B cell (primary cell): ENCODE measurements at regions of chr15 and their contacts with region 1.

Region 1: DNA sequence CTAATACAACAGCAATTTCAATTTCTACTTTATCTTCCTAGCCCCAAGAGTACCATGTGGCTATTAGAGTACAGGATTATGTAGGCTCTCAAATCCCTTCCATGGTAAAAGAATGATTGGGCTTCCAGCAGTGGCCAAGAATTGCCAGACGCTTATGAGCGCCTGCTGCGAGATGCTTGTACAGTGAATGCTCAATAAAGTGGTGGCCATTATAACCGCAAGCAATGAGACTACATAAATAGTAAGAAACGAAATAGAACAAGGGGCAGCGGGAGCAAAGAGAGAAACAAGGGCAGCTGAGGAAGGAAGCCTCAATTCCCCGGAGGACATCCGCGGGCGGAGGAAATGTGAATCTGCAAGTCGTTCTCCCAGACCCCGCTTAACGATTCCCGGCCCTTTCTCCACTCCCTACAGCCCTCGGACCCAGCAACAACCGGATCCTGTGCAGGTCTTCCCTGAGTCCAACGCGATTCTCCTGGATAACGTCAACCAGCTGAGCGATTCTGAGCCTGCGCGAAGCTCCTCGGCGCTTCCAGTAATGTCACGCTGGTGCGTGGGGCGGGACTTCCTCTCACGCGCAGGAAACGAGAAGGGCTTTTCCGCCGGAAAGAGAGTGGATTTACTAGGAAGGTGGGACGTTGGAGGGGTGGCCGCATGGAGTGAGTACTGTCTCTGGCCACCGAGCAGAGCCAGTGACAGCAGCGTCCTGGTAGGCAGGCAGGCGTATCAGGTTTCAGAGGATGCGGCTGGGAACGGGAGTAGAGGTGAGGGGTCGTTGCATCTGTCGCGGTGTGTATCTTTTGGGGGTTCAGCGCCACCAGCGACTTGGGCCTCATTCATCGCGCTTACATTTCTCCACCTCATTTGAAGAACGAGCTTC is 40.5 kb upstream of the AP3B2 start:
- DNase-seq: peak; percentile 86
- ATAC-seq: peak; percentile 95
- H3K4me3 ChIP-seq: peak overlapping the region; percentile 75 to 97 (median 79)
- H3K4me3 Mint-ChIP-seq: peak overlapping the region; percentile 98
- H3K27ac ChIP-seq: peak overlapping the region; percentile 72 to 82
- H3K27ac Mint-ChIP-seq: peak overlapping the region; percentile 90
- H3K4me1 ChIP-seq: peaks cover 16 to 20% of the 10 kb centered on the region in 2 donors
- H3K4me1 Mint-ChIP-seq: peaks cover 41% of the 10 kb centered on the region
- H3K27me3 ChIP-seq: no peaks in the 10 kb centered on the region
- H3K27me3 Mint-ChIP-seq: no peaks in the 10 kb centered on the region
- CTCF ChIP-seq: no peak

Region 2: GRCh38 chr15:82680200-82681102 is 69.7 kb before region 1 on chr15:
- CTCF ChIA-PET with region 1: no interaction called
- POLR2A ChIA-PET with region 1: no interaction called
- intact Hi-C with region 1: loop called (anchors 1 kb)
- DNase-seq: peak; percentile 85
- ATAC-seq: peak; percentile 91
- H3K4me3 ChIP-seq: peak overlapping the region in 4 of 5 experiments; percentile 61 to 84 (median 72)
- H3K4me3 Mint-ChIP-seq: peak overlapping the region; percentile 92
- H3K27ac ChIP-seq: peak overlapping the region; percentile 46 to 65
- H3K27ac Mint-ChIP-seq: peak overlapping the region; percentile 87
- H3K4me1 ChIP-seq: peaks cover 14 to 15% of the 10 kb centered on the region in 2 donors
- H3K4me1 Mint-ChIP-seq: peaks cover 12% of the 10 kb centered on the region
- H3K27me3 ChIP-seq: peaks cover 0 to 21% (median 6%) of the 10 kb centered on the region in 4 experiments
- H3K27me3 Mint-ChIP-seq: peaks cover 6% of the 10 kb centered on the region
- CTCF ChIP-seq: peak; percentile 21

Region 3: DNA sequence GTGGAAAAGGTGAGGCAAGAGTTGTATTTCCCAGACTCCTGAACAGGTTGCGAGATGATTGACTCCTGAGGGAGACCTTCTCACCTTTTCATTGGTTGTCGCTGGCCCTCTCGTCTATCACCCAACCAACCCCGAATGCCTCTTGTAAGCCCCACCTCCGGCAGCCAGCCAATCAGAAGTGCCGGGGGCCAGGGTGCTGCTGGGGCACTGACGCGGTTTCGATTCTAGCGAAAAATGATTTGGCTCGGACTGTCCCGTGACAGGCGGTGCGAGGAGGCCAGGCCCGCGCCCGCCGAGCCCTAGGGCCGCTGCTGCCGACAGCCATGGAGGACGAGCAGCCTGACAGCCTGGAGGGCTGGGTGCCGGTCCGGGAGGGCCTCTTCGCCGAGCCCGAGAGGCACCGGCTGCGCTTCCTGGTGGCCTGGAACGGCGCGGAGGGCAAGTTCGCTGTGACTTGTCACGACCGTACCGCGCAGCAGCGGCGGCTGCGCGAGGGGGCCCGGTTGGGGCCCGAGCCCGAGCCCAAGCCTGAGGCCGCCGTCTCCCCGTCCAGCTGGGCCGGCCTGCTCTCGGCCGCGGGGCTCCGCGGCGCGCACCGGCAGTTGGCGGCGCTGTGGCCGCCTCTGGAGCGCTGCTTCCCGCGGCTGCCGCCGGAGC is 59.3 kb after region 1 on chr15 and contains the start of gene WHAMM:
- CTCF ChIA-PET with region 1: interaction called, 3 read pairs
- POLR2A ChIA-PET with region 1: interaction called, 4 read pairs
- intact Hi-C with region 1: loop called (anchors 1 kb)
- DNase-seq: peak; percentile 97
- ATAC-seq: peak; percentile 89
- H3K4me3 ChIP-seq: peak within 1 kb of the TSS; percentile 82 to 96 (median 86)
- H3K4me3 Mint-ChIP-seq: peak within 1 kb of the TSS; percentile 86
- H3K27ac ChIP-seq: peak within 1 kb of the TSS; percentile 91 to 99
- H3K27ac Mint-ChIP-seq: peak within 1 kb of the TSS; percentile 95
- H3K4me1 ChIP-seq: peaks cover 31 to 41% of the 10 kb centered on the region in 2 donors
- H3K4me1 Mint-ChIP-seq: peaks cover 54% of the 10 kb centered on the region
- H3K27me3 ChIP-seq: no peaks in the 10 kb centered on the region
- H3K27me3 Mint-ChIP-seq: no peaks in the 10 kb centered on the region
- CTCF ChIP-seq: no peak
- total RNA-seq, gene WHAMM: 29.9 and 31.3 TPM in 2 replicates